A549 (cell line): ENCODE measurements at regions of chr1 and their contacts with region 1.

Region 1: GRCh38 chr1:40862008-40862863 is at the start of gene CITED4:
- DNase-seq: peak; percentile 76 to 95
- ATAC-seq: peak; percentile 82 to 88
- H3K4me3 ChIP-seq: peak within 1 kb of the TSS; percentile 78
- H3K27ac ChIP-seq: peak within 1 kb of the TSS; percentile 87 to 95
- H3K4me1 ChIP-seq: peaks cover 48% of the 10 kb centered on the region
- CTCF ChIP-seq: peak; percentile 52
- EP300 ChIP-seq: no peak
- POLR2A ChIP-seq: peak; percentile 94
- RAD21 ChIP-seq: peak; percentile 82 to 92
- polyA plus RNA-seq, gene CITED4: 5.8 and 7.1 TPM in 2 replicates

Region 2: GRCh38 chr1:40691538-40692428 is 170.5 kb before region 1 on chr1 and contains the start of gene NFYC:
- CTCF ChIA-PET with region 1: no interaction called
- POLR2A ChIA-PET with region 1: interaction called, 16 read pairs
- DNase-seq: peak; percentile 87 to 98
- ATAC-seq: peak; percentile 94 to 95
- H3K4me3 ChIP-seq: peak within 1 kb of the TSS; percentile 97
- H3K27ac ChIP-seq: peak within 1 kb of the TSS; percentile 99 to 100
- H3K4me1 ChIP-seq: peaks cover 18% of the 10 kb centered on the region
- CTCF ChIP-seq: no peak
- EP300 ChIP-seq: no peak
- POLR2A ChIP-seq: peak; percentile 62
- RAD21 ChIP-seq: no peak
- polyA plus RNA-seq, gene NFYC: 37.8 and 43.4 TPM in 2 replicates

Region 3: DNA sequence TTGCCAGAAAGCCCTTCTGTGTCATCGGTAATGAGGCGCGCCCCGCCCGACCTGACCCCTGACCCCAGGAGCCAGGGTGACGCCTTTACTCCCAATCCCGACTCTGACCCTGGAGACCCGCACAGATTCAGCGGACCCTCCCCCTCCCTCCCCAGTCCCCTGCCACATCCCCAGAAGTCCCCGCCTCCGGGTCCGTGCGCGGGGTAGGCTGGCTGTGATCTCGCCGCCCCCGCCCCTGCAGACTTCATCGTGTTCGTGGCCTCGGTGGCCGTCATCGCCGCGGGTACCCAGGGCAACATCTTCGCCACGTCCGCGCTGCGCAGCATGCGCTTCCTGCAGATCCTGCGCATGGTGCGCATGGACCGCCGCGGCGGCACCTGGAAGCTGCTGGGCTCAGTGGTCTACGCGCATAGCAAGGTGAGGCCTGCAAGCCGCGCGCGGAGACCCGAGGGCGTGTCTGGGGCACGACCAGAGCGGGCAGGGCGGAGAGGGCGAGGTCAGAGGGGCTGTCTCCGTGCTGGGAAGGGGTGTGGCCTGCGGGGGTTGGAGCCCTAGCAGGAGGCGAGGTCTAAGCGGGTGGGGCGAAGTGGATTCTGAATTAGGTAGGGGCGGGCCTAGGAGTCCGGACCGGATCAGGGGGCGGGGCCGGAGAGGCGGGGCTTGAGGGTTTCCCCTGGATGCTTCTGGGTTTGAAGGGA is 43.8 kb before region 1 on chr1:
- CTCF ChIA-PET with region 1: no interaction called
- POLR2A ChIA-PET with region 1: no interaction called
- DNase-seq: no peak
- ATAC-seq: peak in 1 of 2 experiments; percentile 25; a peak in 1 of 6 replicates
- H3K4me3 ChIP-seq: no peak overlapping the region
- H3K27ac ChIP-seq: no peak overlapping the region
- H3K4me1 ChIP-seq: no peaks in the 10 kb centered on the region
- CTCF ChIP-seq: no peak
- EP300 ChIP-seq: no peak
- POLR2A ChIP-seq: no peak
- RAD21 ChIP-seq: no peak

Region 4: GRCh38 chr1:40849801-40850592 is 12.2 kb before region 1 on chr1:
- CTCF ChIA-PET with region 1: interaction called, 75 read pairs
- POLR2A ChIA-PET with region 1: interaction called, 35 read pairs
- DNase-seq: peak; percentile 57 to 61
- ATAC-seq: peak; percentile 83 to 91
- H3K4me3 ChIP-seq: no peak overlapping the region
- H3K27ac ChIP-seq: peak overlapping the region; percentile 44 to 52; a peak in 3 of 6 replicates
- H3K4me1 ChIP-seq: peaks cover 13% of the 10 kb centered on the region; the same call in 2 of the 3 replicates
- CTCF ChIP-seq: peak; percentile 74
- EP300 ChIP-seq: no peak
- POLR2A ChIP-seq: no peak
- RAD21 ChIP-seq: peak; percentile 66 to 74

Region 5: DNA sequence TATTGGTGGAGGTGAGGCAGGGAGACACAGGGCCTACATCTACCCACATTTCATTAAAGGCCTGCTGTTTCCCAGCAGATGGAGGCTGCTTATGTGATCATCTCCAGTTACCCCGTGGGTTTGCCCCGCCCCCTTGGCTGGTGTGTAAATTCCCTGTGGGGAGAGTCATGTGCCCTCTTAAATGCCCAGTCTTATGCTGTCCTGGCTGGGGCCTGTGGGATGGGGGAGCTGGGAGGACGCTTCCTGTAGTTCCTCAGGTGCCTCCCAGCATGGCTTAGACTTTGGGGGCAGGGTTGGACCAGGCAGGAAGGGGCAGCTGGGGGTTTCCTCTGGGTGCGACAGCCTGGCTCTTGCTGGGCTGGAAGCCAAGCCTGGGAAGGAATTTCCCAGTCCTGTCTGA is 15.5 kb after region 1 on chr1:
- CTCF ChIA-PET with region 1: interaction called, 15 read pairs
- POLR2A ChIA-PET with region 1: interaction called, 8 read pairs
- DNase-seq: peak in 1 of 2 experiments; percentile 77
- ATAC-seq: peak; percentile 62 to 73
- H3K4me3 ChIP-seq: no peak overlapping the region
- H3K27ac ChIP-seq: peak overlapping the region; percentile 86 to 95
- H3K4me1 ChIP-seq: peaks cover 44% of the 10 kb centered on the region
- CTCF ChIP-seq: no peak
- EP300 ChIP-seq: peak in 1 of 2 experiments; percentile 20; a peak in 2 of 5 replicates
- POLR2A ChIP-seq: no peak
- RAD21 ChIP-seq: 0 out of 5 replicates have a peak, but pooled peaks of 1 of the 2 experiments have one; percentile 14

Region 6: GRCh38 chr1:40898431-40898901 is 36.2 kb after region 1 on chr1:
- CTCF ChIA-PET with region 1: interaction called, 4 read pairs
- POLR2A ChIA-PET with region 1: interaction called, 11 read pairs
- DNase-seq: peak in 1 of 2 experiments; percentile 71
- ATAC-seq: peak; percentile 48 to 65; a peak in 3 of 6 replicates
- H3K4me3 ChIP-seq: no peak overlapping the region
- H3K27ac ChIP-seq: peak overlapping the region; percentile 73 to 85
- H3K4me1 ChIP-seq: peaks cover 45% of the 10 kb centered on the region
- CTCF ChIP-seq: no peak
- EP300 ChIP-seq: peak in 1 of 2 experiments; percentile 35; a peak in 1 of 5 replicates
- POLR2A ChIP-seq: no peak
- RAD21 ChIP-seq: no peak

Region 7: GRCh38 chr1:40939320-40940059 is 77.3 kb after region 1 on chr1:
- CTCF ChIA-PET with region 1: interaction called, 602 read pairs
- POLR2A ChIA-PET with region 1: interaction called, 37 read pairs
- DNase-seq: peak in 1 of 2 experiments; percentile 69
- ATAC-seq: peak; percentile 83 to 88
- H3K4me3 ChIP-seq: no peak overlapping the region
- H3K27ac ChIP-seq: peak overlapping the region; percentile 84 to 94
- H3K4me1 ChIP-seq: peaks cover 52% of the 10 kb centered on the region
- CTCF ChIP-seq: no peak
- EP300 ChIP-seq: no peak
- POLR2A ChIP-seq: no peak
- RAD21 ChIP-seq: no peak

Region 8: GRCh38 chr1:41003640-41004220 is 141.5 kb after region 1 on chr1:
- CTCF ChIA-PET with region 1: interaction called, 9 read pairs
- POLR2A ChIA-PET with region 1: interaction called, 13 read pairs
- DNase-seq: peak; percentile 79 to 90
- ATAC-seq: peak; percentile 78 to 81
- H3K4me3 ChIP-seq: no peak overlapping the region
- H3K27ac ChIP-seq: peak overlapping the region; percentile 47 to 74; a peak in 4 of 6 replicates
- H3K4me1 ChIP-seq: peaks cover 85% of the 10 kb centered on the region
- CTCF ChIP-seq: peak; percentile 48
- EP300 ChIP-seq: no peak
- POLR2A ChIP-seq: no peak
- RAD21 ChIP-seq: peak; percentile 49 to 55